ENCODE measurements at regions of chr2 and their contacts with region 1.

Region 1: DNA sequence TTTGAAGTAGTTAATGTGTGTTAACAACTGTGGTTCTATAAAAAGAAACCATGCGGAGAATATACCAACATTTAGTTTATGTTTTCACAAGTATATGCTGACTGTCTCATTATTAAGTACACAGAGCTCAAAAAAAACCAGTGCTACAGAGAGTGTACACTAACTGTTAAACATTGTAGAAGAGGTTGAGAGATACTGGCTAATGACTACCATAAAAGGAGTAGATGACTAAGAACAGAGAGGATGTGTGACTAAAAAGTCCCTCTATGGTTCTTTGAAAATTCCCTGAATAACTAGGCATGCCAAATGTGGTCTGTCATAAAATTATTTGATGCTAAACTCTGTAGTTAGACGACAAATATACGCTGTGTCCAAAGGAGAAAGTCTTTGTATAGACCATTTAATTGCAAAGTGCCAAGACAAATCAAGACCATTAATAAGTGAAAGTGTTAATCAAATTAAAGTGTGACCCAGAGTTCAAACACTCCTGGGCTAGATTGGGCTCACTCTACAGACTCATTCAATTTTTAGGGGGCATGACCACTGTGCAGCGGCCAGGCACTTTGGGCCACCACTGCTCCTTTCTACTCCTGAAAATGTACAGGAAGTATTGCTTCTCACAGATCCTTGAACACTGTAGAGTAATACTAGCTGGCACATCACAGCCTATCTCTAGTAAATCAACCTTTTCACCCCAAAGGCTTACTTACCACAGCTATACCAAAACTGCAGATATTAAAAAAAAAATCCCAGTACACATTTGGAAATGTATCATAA is 45.1 kb upstream of the SERTAD2 start:
- DNase-seq: no peak
- H3K4me3 Mint-ChIP-seq: peak overlapping the region; percentile 47
- H3K27ac Mint-ChIP-seq: peak overlapping the region; percentile 72
- H3K4me1 Mint-ChIP-seq: peaks cover 41% of the 10 kb centered on the region
- H3K27me3 Mint-ChIP-seq: no peaks in the 10 kb centered on the region

Region 2: DNA sequence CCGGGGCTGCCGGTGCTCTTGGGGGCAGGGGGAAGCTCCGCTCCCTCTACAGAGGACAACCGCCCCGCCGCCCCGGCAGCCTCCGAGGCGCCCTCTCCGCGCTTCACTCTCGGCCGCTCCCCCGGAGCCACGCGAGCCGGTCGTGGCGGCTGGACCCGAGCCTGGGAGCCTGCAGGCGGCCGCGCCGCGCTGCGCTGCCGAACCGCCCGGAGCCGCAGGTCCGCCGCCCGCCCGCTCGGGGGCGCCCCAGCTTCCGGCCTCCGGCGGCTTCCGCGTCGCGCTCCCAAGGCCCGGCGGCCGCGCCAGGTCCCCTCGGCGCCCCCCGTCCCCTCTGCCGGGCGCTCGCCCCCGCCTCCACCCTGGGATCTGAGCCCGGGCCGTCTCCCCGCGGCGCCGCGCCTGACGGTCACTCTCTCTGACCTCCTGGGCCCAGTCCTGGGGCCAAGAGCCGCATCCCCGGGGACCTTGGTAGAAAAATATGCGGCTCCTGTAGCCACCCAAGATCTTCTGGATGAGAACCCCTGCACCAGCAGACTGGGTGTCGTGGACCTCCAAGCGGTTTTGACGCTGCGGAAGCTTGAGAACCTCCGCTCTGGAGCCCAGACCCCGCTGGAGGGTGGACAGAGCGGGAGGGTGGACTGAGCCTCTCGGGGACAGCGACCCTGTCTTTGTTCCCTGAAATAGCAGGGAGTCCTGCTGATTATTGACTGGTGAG is 89.5 kb before region 1 on chr2:
- CTCF ChIA-PET with region 1: no interaction called
- POLR2A ChIA-PET with region 1: no interaction called
- intact Hi-C with region 1: loop called (anchors 1 kb)
- DNase-seq: peak; percentile 75
- H3K4me3 Mint-ChIP-seq: peak overlapping the region; percentile 57
- H3K27ac Mint-ChIP-seq: no peak overlapping the region
- H3K4me1 Mint-ChIP-seq: peaks cover 26% of the 10 kb centered on the region
- H3K27me3 Mint-ChIP-seq: no peaks in the 10 kb centered on the region

Region 3: GRCh38 chr2:64675860-64676259 is 23.0 kb before region 1 on chr2:
- CTCF ChIA-PET with region 1: no interaction called
- POLR2A ChIA-PET with region 1: no interaction called
- intact Hi-C with region 1: loop called (anchors 1 kb)
- DNase-seq: peak; percentile 87
- H3K4me3 Mint-ChIP-seq: no peak overlapping the region
- H3K27ac Mint-ChIP-seq: no peak overlapping the region
- H3K4me1 Mint-ChIP-seq: peaks cover 25% of the 10 kb centered on the region
- H3K27me3 Mint-ChIP-seq: no peaks in the 10 kb centered on the region

Region 4: GRCh38 chr2:64730551-64731262 is 31.9 kb after region 1 on chr2:
- CTCF ChIA-PET with region 1: no interaction called
- POLR2A ChIA-PET with region 1: no interaction called
- intact Hi-C with region 1: loop called (anchors 1 kb)
- DNase-seq: peak; percentile 47
- H3K4me3 Mint-ChIP-seq: peak overlapping the region; percentile 80
- H3K27ac Mint-ChIP-seq: peak overlapping the region; percentile 83
- H3K4me1 Mint-ChIP-seq: peaks cover 42% of the 10 kb centered on the region
- H3K27me3 Mint-ChIP-seq: no peaks in the 10 kb centered on the region

Region 5: GRCh38 chr2:64737547-64737946 is 38.7 kb after region 1 on chr2:
- CTCF ChIA-PET with region 1: no interaction called
- POLR2A ChIA-PET with region 1: no interaction called
- intact Hi-C with region 1: loop called (anchors 1 kb)
- DNase-seq: no peak
- H3K4me3 Mint-ChIP-seq: no peak overlapping the region
- H3K27ac Mint-ChIP-seq: no peak overlapping the region
- H3K4me1 Mint-ChIP-seq: peaks cover 16% of the 10 kb centered on the region
- H3K27me3 Mint-ChIP-seq: no peaks in the 10 kb centered on the region

Region 6: GRCh38 chr2:64767670-64768468 is 69.0 kb after region 1 on chr2:
- CTCF ChIA-PET with region 1: interaction called, 5 read pairs
- POLR2A ChIA-PET with region 1: no interaction called
- intact Hi-C with region 1: loop called (anchors 2 kb)
- DNase-seq: peak; percentile 84
- H3K4me3 Mint-ChIP-seq: peak overlapping the region; percentile 80
- H3K27ac Mint-ChIP-seq: peak overlapping the region; percentile 77
- H3K4me1 Mint-ChIP-seq: peaks cover 19% of the 10 kb centered on the region
- H3K27me3 Mint-ChIP-seq: no peaks in the 10 kb centered on the region

Region 7: GRCh38 chr2:64865073-64865830 is 166.4 kb after region 1 on chr2:
- CTCF ChIA-PET with region 1: no interaction called
- POLR2A ChIA-PET with region 1: no interaction called
- intact Hi-C with region 1: loop called (anchors 1 kb)
- DNase-seq: peak; percentile 72
- H3K4me3 Mint-ChIP-seq: peak overlapping the region; percentile 57
- H3K27ac Mint-ChIP-seq: no peak overlapping the region
- H3K4me1 Mint-ChIP-seq: no peaks in the 10 kb centered on the region
- H3K27me3 Mint-ChIP-seq: peaks cover 5% of the 10 kb centered on the region

Measured in activated CD4-positive, alpha-beta memory T cell treated with anti-CD3 and anti-CD28 coated beads for 36 hours (primary cell).